ENCODE measurements at regions of chr10 and their contacts with region 1.

Region 1: DNA sequence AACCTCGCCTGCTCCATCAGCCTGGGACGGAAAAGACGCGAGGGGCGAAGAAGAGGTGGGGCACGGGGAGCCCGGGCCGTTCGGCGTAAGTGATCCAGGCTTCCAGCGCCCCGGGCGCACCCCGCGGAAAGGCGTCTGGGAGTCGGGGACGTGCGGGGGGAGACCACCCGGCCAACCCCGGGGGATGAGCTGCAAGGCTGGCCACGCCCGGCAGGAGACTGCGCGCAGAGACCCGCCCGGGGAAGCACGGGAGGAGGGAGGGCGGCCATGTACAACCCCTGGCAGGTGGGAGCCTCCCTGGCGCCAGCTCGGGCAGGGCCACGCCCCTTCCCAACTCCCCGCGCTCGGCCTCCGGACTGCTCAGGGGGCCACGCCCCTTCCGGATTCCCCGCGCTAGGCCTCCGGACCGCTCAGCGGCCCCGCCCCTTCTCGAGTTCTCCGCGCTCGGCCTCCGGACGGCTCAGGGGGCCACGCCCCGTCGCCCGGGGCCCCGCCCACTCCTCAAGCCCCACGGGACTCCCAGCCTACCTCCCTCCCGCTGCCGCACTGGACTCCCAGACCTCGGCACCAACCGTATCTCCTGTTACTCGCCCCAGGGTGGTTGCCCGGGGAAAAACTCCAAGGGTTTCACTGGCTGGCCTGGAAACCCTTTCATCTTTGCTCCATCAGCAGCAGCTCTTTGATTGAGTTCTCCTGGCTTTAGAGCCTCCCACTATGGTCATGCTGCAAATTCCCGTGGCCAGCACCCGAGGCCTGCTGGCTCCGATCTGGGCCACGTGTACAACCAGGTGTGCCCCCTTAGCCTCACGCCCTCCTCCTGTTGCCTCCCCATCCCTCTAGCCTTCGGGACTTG is 284.4 kb downstream of the ZEB1 start:
- DNase-seq: peak; percentile 92
- H3K4me3 Mint-ChIP-seq: peak overlapping the region; percentile 86
- H3K27ac Mint-ChIP-seq: peak overlapping the region; percentile 58
- H3K4me1 Mint-ChIP-seq: peaks cover 31% of the 10 kb centered on the region
- H3K27me3 Mint-ChIP-seq: peaks cover 2% of the 10 kb centered on the region

Region 2: DNA sequence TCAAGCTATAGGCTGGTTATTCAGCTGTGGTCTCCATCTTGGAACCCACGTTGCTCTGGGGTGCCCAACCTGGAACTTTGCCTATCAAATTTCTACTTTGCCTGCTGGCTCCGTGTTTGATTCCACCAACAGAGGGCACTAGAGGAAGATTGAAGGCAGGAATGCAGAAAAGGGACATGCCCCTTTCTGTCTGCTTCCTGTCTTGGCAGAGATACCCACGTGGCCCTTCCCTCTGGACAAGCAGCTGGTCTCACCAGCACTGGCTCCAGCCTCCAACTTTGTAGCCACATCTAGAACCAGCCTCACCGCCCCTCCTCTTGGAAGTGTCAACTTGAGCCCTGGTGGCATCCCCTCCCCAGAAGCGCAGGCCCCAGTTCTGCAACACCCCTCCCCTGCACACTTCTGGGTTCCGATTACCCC is 519.7 kb before region 1 on chr10:
- CTCF ChIA-PET with region 1: no interaction called
- intact Hi-C with region 1: loop called (anchors 10 kb)
- DNase-seq: peak; percentile 86
- H3K4me3 Mint-ChIP-seq: no peak overlapping the region
- H3K27ac Mint-ChIP-seq: peak overlapping the region; percentile 54
- H3K4me1 Mint-ChIP-seq: peaks cover 6% of the 10 kb centered on the region
- H3K27me3 Mint-ChIP-seq: no peaks in the 10 kb centered on the region

Region 3: DNA sequence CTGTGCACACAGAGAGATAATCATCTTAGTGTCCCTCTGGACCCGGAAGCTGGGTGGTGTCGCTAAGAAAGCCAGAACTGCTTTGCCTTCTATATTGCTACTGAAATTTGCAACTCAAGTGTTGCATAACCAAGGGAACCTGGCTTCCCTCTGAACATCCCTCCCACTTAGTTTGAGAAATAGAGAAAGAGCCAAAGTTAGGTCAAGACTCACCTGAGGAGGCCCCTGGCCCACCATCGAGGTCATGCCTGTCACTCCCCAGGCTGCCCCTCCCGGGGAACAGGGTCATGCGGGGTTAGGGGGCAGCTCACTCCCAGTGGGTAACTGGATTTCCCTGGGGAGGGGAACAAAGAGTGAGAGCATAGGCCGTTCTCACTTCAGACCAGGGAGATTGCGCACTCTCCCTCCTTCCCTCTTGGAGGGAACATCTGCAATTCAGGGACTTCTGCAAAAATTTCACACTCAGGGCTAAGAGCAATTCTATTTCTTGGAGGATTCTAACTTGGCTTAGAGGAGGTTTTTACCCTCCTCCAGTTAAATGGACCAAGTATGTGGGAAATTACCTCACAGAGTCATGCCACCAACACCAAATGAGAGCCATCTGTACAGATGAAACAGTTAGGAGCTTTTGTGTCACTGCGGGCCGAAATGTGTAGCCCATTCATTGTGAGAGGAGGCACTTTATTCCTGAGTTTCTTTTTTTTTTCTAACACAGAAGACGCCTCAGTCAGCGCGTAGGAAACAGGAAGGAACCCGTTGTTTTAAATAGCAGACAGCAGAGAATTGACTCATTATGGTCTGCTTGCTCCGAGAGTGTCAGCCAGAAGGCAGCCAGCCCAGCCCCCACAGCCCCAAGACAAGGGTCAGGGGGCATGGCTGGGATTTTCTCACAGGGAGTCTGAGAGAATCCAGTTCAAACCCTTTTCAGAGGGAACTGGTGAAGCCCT is 103.9 kb after region 1 on chr10:
- CTCF ChIA-PET with region 1: no interaction called
- intact Hi-C with region 1: loop called (anchors 1 kb)
- DNase-seq: peak; percentile 85
- H3K4me3 Mint-ChIP-seq: peak overlapping the region; percentile 5
- H3K27ac Mint-ChIP-seq: peak overlapping the region; percentile 83
- H3K4me1 Mint-ChIP-seq: peaks cover 22% of the 10 kb centered on the region
- H3K27me3 Mint-ChIP-seq: no peaks in the 10 kb centered on the region

Region 4: GRCh38 chr10:31759799-31760626 is 156.6 kb after region 1 on chr10:
- CTCF ChIA-PET with region 1: no interaction called
- intact Hi-C with region 1: loop called (anchors 1 kb)
- DNase-seq: peak; percentile 96
- H3K4me3 Mint-ChIP-seq: peak overlapping the region; percentile 94
- H3K27ac Mint-ChIP-seq: peak overlapping the region; percentile 95
- H3K4me1 Mint-ChIP-seq: peaks cover 18% of the 10 kb centered on the region
- H3K27me3 Mint-ChIP-seq: no peaks in the 10 kb centered on the region

Region 5: GRCh38 chr10:32055813-32056600 is 452.5 kb after region 1 on chr10 and contains the start of gene KIF5B:
- CTCF ChIA-PET with region 1: no interaction called
- intact Hi-C with region 1: loop called (anchors 5 kb)
- DNase-seq: peak; percentile 84
- H3K4me3 Mint-ChIP-seq: peak within 1 kb of the TSS; percentile 96
- H3K27ac Mint-ChIP-seq: peak within 1 kb of the TSS; percentile 92
- H3K4me1 Mint-ChIP-seq: peaks cover 39% of the 10 kb centered on the region
- H3K27me3 Mint-ChIP-seq: no peaks in the 10 kb centered on the region
- total RNA-seq, gene KIF5B: 64.9 to 67.8 TPM